Mammary epithelial cell (primary cell): ENCODE measurements at regions of chr10 and their contacts with region 1.

Region 1: GRCh38 chr10:99395750-99396445 is 34.5 kb downstream of the GOT1 start:
- DNase-seq: peak; percentile 82
- H3K4me3 ChIP-seq: no peak overlapping the region
- H3K27ac ChIP-seq: peak overlapping the region; percentile 40
- H3K4me1 ChIP-seq: peaks cover 56% of the 10 kb centered on the region
- H3K27me3 ChIP-seq: no peaks in the 10 kb centered on the region
- CTCF ChIP-seq: no peak

Region 2: DNA sequence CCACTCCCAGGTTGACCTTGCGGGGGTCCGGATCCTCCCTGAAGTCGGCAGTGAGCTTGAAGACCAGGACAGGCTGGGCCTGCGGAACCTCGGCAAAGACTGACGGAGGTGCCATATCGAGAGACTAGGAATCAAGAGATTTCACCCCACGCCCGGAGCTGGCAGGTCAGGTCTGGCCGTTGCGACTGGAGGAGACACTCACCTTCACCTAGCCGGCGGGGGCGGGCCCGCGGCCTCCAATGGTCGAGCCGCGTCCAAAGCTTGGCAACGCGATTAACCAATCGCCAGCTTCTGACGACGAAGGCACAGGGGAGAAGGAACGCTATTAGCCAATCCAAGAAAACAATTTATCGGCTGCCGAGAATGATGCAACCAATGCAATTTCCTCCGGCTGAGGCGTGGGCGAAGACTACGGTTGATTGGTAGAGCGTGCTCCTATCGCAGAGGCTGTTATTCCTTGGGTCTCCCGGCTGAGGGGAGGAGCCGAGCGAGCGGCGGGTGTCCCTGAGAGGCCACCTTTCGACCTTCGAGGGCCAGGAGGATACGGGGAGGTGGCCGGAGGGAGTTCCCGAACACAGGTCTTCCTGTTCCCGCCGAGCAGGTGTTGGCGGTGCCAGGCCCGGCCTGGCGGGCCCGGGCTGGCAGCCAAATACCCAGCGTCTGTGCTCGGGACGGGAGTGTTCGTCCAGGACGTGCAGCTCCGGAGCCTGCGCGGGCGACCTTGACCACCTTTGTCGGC is 34.7 kb after region 1 on chr10 and contains the start of gene GOT1:
- CTCF ChIA-PET with region 1: interaction called, 9 read pairs
- dilution Hi-C with region 1: loop called (anchors 5 kb)
- in situ Hi-C with region 1: no loop called
- intact Hi-C with region 1: loop called (anchors 1 kb)
- DNase-seq: peak; percentile 100
- H3K4me3 ChIP-seq: peak within 1 kb of the TSS; percentile 82 to 97 (median 90)
- H3K27ac ChIP-seq: peak within 1 kb of the TSS; percentile 84
- H3K4me1 ChIP-seq: peaks cover 10% of the 10 kb centered on the region
- H3K27me3 ChIP-seq: no peaks in the 10 kb centered on the region
- CTCF ChIP-seq: no peak
- total RNA-seq, gene GOT1: 70.0 to 75.5 TPM

Region 3: DNA sequence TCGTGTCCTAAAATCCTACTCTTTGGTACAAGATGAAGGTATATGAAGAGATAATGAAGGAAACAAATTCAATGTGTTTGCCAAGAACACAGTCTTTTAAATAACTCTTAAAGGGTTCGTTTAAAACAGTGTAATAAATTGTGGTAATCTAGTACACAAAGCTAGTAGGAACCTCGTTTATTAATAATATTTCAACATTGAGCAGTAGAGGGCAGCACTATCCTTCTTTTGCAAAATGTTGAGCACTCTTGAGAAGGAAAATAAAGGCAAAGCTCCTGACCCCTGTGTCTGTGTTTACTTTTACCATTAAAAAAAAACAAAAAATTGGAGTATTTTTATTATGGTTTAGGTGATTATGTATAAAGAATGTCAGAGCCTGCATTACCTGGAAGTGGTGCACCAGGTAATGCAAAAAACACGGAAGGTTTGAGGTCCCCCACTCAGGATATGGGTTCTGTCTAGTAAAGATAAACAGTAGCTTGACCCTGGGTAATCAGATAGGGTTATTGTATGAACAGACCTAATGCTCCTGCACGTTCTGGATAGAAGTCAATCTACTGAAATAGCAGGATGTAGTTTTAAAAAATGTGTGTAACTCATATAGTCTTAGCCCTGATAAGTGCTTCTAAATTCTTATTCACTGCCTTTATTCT is 40.2 kb after region 1 on chr10:
- CTCF ChIA-PET with region 1: interaction called, 4 read pairs
- dilution Hi-C with region 1: loop called (anchors 5 kb)
- in situ Hi-C with region 1: no loop called
- intact Hi-C with region 1: loop called (anchors 1 kb)
- DNase-seq: peak; percentile 37
- H3K4me3 ChIP-seq: no peak overlapping the region
- H3K27ac ChIP-seq: no peak overlapping the region
- H3K4me1 ChIP-seq: peaks cover 3% of the 10 kb centered on the region
- H3K27me3 ChIP-seq: no peaks in the 10 kb centered on the region
- CTCF ChIP-seq: peak; percentile 42 to 52

Region 4: DNA sequence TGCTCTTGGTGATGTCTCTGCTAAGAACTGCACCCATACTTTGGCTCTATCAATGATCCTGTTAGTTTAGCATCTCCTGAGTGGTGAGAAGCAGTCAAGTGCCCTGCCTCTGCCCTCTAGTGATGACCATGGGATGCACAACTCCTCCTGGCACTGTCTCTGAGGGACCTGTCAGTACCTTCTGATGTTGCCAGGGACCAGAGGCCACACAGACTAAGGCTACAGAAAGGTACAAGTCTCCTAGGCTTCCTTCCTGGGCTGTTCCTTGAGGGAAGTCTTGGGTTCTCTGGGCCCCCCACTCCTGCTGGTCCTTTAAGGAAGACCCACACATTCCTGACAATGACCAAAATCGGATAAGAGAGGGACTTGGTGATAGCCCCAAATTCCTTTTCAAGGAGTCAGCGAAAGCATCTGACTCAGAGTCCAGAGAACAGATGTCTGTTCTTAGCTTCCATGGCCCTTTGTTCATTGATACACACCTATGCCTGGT is 152.2 kb after region 1 on chr10:
- CTCF ChIA-PET with region 1: no interaction called
- dilution Hi-C with region 1: no loop called
- in situ Hi-C with region 1: no loop called
- intact Hi-C with region 1: loop called (anchors 2 kb)
- DNase-seq: peak; percentile 55
- H3K4me3 ChIP-seq: no peak overlapping the region
- H3K27ac ChIP-seq: no peak overlapping the region
- H3K4me1 ChIP-seq: peaks cover 8% of the 10 kb centered on the region
- H3K27me3 ChIP-seq: peaks cover 3% of the 10 kb centered on the region
- CTCF ChIP-seq: peak; percentile 12 to 57

Region 5: DNA sequence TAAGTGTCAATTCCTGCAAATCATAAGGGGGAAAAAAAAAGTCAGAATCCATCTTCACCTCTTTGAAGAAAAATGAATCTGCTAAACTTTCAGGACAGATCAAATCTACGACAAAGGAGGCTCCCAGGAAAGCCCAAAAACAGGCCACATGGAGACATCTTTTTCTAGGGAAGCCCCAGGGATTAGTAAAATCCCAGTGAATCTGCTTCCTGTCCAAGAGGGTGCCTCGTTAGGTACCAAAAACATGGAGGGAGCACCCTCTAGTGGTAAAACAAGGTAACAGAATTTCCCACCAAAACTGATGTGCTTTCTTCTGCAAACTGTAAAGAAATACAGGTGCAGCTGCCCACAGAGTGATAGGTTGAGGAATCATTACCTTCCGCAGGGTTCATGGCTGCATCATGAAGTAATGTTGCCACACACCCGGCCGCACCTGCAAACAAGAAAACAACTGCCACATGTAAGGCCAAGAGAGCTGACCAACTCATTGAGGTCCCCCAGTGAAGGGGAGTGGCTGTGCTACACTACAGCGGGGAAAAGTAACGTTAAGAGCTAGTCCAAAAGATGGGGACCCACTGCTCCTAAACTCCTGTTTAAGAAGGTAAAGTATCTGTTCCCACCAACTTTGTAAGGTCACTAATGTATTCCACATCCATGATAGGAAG is 216.4 kb after region 1 on chr10:
- CTCF ChIA-PET with region 1: no interaction called
- dilution Hi-C with region 1: no loop called
- in situ Hi-C with region 1: loop called in 1 of 2 experiments (anchors 5 kb)
- intact Hi-C with region 1: loop called (anchors 1 kb)
- DNase-seq: peak; percentile 62
- H3K4me3 ChIP-seq: no peak overlapping the region
- H3K27ac ChIP-seq: no peak overlapping the region
- H3K4me1 ChIP-seq: peaks cover 1% of the 10 kb centered on the region
- H3K27me3 ChIP-seq: no peaks in the 10 kb centered on the region
- CTCF ChIP-seq: peak; percentile 80 to 82